ENCODE measurements at regions of chr17 and their contacts with region 1.

Region 1: GRCh38 chr17:44899069-44899782 is at the start of gene EFTUD2:
- DNase-seq: peak; percentile 87 to 96 (median 91)
- ATAC-seq: peak; percentile 95
- H3K4me3 ChIP-seq: peak within 1 kb of the TSS; percentile 82
- H3K4me3 Mint-ChIP-seq: peak within 1 kb of the TSS; percentile 95
- H3K27ac ChIP-seq: peak within 1 kb of the TSS; percentile 98 to 99
- H3K27ac Mint-ChIP-seq: peak within 1 kb of the TSS; percentile 99
- H3K4me1 ChIP-seq: peaks cover 29% of the 10 kb centered on the region
- H3K4me1 Mint-ChIP-seq: peaks cover 37% of the 10 kb centered on the region
- H3K27me3 ChIP-seq: no peaks in the 10 kb centered on the region
- H3K27me3 Mint-ChIP-seq: peaks cover 10% of the 10 kb centered on the region
- CTCF ChIP-seq: no peak
- total RNA-seq, gene EFTUD2: 105 to 112 TPM

Region 2: DNA sequence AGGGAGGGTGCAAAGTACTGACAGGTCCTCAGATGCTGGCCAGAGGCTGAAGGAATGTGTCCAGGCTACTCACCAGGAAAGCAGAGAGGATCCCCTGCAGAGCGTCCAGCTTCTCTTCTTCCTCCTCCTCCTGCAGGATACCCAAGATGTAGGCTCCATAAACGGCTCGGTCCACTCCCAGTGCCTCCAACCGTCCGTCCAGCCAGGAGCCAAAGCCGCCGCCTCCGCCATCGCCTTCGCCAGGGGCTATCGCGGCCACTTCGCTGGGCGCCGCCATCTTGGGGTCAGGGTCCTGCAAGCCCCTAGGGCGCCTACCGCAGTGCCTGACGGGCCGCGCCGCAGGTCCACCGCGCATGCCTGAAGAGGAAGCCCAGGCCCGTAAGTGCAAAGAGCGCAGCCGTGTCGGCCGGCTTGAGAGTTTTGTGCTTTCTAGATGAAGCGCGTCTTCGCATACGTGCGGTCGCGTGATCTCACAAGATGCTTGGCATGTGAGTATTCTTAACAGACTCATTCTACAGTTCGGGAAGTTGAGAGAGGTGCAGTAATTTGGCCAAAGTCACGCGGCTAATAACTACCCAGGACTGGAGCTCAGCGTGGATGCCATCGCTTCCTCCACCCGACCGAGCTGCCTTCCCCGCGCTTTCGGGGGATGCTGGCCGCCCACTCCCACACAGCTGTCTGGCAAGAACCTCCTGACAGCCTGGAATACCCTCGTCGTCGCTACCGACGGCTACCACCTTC is 209.6 kb before region 1 on chr17 and contains the start of gene CCDC43:
- CTCF ChIA-PET with region 1: no interaction called
- POLR2A ChIA-PET with region 1: interaction called, 3 read pairs
- intact Hi-C with region 1: loop called in 1 of 2 experiments (anchors 2 kb)
- DNase-seq: peak; percentile 88 to 96 (median 90)
- ATAC-seq: peak; percentile 97
- H3K4me3 ChIP-seq: peak within 1 kb of the TSS; percentile 88
- H3K4me3 Mint-ChIP-seq: peak within 1 kb of the TSS; percentile 98
- H3K27ac ChIP-seq: peak within 1 kb of the TSS; percentile 88 to 89
- H3K27ac Mint-ChIP-seq: peak within 1 kb of the TSS; percentile 96
- H3K4me1 ChIP-seq: peaks cover 27% of the 10 kb centered on the region
- H3K4me1 Mint-ChIP-seq: peaks cover 30% of the 10 kb centered on the region
- H3K27me3 ChIP-seq: no peaks in the 10 kb centered on the region
- H3K27me3 Mint-ChIP-seq: no peaks in the 10 kb centered on the region
- CTCF ChIP-seq: no peak
- total RNA-seq, gene CCDC43: 23.6 to 25.3 TPM

Region 3: GRCh38 chr17:44850612-44851011 is 48.6 kb before region 1 on chr17:
- CTCF ChIA-PET with region 1: no interaction called
- POLR2A ChIA-PET with region 1: no interaction called
- intact Hi-C with region 1: no loop called
- DNase-seq: no peak
- ATAC-seq: no peak
- H3K4me3 ChIP-seq: no peak overlapping the region
- H3K4me3 Mint-ChIP-seq: no peak overlapping the region
- H3K27ac ChIP-seq: no peak overlapping the region
- H3K27ac Mint-ChIP-seq: no peak overlapping the region
- H3K4me1 ChIP-seq: no peaks in the 10 kb centered on the region
- H3K4me1 Mint-ChIP-seq: no peaks in the 10 kb centered on the region
- H3K27me3 ChIP-seq: no peaks in the 10 kb centered on the region
- H3K27me3 Mint-ChIP-seq: no peaks in the 10 kb centered on the region
- CTCF ChIP-seq: no peak

Region 4: DNA sequence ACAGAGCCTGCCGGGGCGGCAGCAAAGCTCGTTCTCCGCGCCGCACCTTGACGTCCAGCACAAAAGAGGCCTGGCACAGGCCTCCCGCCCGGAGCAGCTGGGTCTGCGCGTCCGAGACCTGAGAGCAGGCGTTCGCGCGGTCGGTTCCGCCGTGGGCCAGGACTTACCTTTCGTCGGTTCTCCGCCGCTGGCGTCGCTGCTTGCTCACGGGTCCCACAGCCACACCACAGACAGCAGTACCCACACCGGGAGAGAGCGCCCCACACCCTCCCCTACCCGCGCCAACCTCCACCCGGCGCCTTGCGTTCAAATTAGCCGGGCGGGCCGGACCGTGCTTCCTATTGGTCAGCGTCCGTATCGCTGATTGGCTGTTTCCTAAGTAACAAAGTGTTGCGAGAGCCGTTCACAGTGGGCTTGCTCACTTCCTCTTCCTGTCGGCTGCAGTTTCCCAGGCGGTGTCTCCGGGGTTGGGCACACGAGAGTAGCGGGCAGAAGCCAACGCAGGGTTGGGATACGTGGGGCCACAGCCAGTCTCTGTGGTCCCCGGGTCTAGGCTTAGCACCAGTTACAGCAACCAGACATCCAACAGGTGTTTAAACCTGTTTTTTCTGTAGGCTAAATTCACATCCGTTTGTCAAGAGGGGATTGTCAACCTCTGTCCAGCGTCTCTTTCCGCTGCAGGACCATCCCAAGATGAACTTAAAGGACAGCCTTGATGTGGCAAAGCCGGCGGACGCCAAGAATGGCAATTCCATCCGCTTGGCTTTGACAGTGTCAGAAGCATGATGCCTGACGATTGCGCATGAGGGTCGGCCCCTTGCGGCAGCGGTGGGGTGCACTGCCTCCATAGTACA is 48.5 kb after region 1 on chr17 and contains the start of gene KIF18B:
- CTCF ChIA-PET with region 1: no interaction called
- POLR2A ChIA-PET with region 1: no interaction called
- intact Hi-C with region 1: loop called in 1 of 2 experiments (anchors 2 kb)
- DNase-seq: peak; percentile 77 to 94 (median 84)
- ATAC-seq: peak; percentile 98
- H3K4me3 ChIP-seq: peak within 1 kb of the TSS; percentile 60
- H3K4me3 Mint-ChIP-seq: peak within 1 kb of the TSS; percentile 93
- H3K27ac ChIP-seq: peak within 1 kb of the TSS in 1 of 2 donors; percentile 25
- H3K27ac Mint-ChIP-seq: peak within 1 kb of the TSS; percentile 85
- H3K4me1 ChIP-seq: peaks cover 20% of the 10 kb centered on the region
- H3K4me1 Mint-ChIP-seq: peaks cover 7% of the 10 kb centered on the region
- H3K27me3 ChIP-seq: peaks cover 0 to 5% of the 10 kb centered on the region in 2 experiments
- H3K27me3 Mint-ChIP-seq: no peaks in the 10 kb centered on the region
- CTCF ChIP-seq: no peak
- total RNA-seq, gene KIF18B: 0.05 to 0.08 TPM

Region 5: GRCh38 chr17:45051060-45051719 is 152.0 kb after region 1 on chr17 and contains the start of gene DCAKD:
- CTCF ChIA-PET with region 1: interaction called, 3 read pairs
- POLR2A ChIA-PET with region 1: interaction called, 10 read pairs
- intact Hi-C with region 1: no loop called
- DNase-seq: peak; percentile 75 to 98 (median 86)
- ATAC-seq: peak; percentile 85
- H3K4me3 ChIP-seq: peak within 1 kb of the TSS; percentile 82
- H3K4me3 Mint-ChIP-seq: peak within 1 kb of the TSS; percentile 88
- H3K27ac ChIP-seq: peak within 1 kb of the TSS; percentile 83 to 96
- H3K27ac Mint-ChIP-seq: peak within 1 kb of the TSS; percentile 96
- H3K4me1 ChIP-seq: peaks cover 43% of the 10 kb centered on the region
- H3K4me1 Mint-ChIP-seq: peaks cover 33% of the 10 kb centered on the region
- H3K27me3 ChIP-seq: no peaks in the 10 kb centered on the region
- H3K27me3 Mint-ChIP-seq: no peaks in the 10 kb centered on the region
- CTCF ChIP-seq: no peak
- total RNA-seq, gene DCAKD: 11.6 to 12.2 TPM

Region 6: GRCh38 chr17:45060797-45061605 is 161.8 kb after region 1 on chr17 and contains the start of gene NMT1:
- CTCF ChIA-PET with region 1: no interaction called
- POLR2A ChIA-PET with region 1: interaction called, 7 read pairs
- intact Hi-C with region 1: loop called in 1 of 2 experiments (anchors 1 kb)
- DNase-seq: peak; percentile 87 to 99 (median 92)
- ATAC-seq: peak; percentile 89
- H3K4me3 ChIP-seq: peak within 1 kb of the TSS; percentile 72
- H3K4me3 Mint-ChIP-seq: peak within 1 kb of the TSS; percentile 100
- H3K27ac ChIP-seq: peak within 1 kb of the TSS; percentile 80 to 87
- H3K27ac Mint-ChIP-seq: peak within 1 kb of the TSS; percentile 92
- H3K4me1 ChIP-seq: peaks cover 50% of the 10 kb centered on the region
- H3K4me1 Mint-ChIP-seq: peaks cover 55% of the 10 kb centered on the region
- H3K27me3 ChIP-seq: no peaks in the 10 kb centered on the region
- H3K27me3 Mint-ChIP-seq: no peaks in the 10 kb centered on the region
- CTCF ChIP-seq: no peak
- total RNA-seq, gene NMT1: 61.1 to 62.2 TPM

Measured in CD4-positive, alpha-beta T cell (primary cell).